Heart right ventricle (tissue), 16 donors: ENCODE measurements at regions of chr7 and their contacts with region 1.

Region 1: GRCh38 chr7:24199978-24200377 is 84.0 kb upstream of the NPY start:
- DNase-seq: no peak
- ATAC-seq: no peak
- H3K4me3 ChIP-seq: no peak overlapping the region
- H3K27ac ChIP-seq: no peak overlapping the region
- H3K4me1 ChIP-seq: no peaks in the 10 kb centered on the region
- H3K27me3 ChIP-seq: peaks cover 0 to 8% (median 0%) of the 10 kb centered on the region in 7 donors
- CTCF ChIP-seq: no peak

Region 2: DNA sequence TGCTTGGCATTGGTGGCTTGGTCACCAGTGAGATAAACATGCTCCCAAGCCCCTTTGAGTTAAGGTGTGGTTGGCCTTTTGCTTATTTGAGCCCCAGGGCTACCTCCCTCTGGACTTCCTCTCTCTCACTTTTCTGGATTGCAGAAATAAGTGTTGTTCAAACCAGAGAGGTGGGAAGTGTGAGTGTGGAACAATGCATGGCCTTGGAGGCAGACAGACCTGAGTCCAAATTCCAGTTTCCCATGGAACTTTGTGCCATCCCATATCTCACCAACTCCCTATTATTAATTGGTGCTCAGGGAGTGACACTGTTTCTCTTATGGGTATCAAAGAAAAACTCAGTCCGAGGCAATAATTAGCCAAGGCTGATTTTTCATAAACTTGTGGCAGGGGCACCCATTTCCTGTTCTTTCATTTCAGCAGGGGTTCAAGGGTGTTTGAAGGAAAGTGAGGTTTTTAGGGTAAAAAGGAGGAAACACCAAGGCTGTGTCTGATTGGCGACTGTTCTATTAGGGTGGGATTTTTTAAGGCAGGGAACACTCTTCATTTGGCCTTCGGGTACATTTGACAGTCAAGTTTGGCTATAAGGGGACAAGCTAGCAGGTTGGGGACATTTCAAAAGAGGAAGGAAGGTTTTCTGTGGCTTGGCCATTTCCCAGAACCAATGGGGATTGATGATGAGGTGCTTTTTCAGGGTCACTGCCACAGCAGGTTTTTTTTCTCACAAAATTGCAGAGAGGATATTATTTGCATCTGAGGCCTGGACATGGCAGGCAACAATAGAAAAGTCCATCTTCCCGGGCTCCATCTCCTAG is 64.8 kb before region 1 on chr7:
- intact Hi-C with region 1: loop called in 1 of 10 experiments (anchors 10 kb)
- DNase-seq: no peak
- ATAC-seq: no peak
- H3K4me3 ChIP-seq: no peak overlapping the region
- H3K27ac ChIP-seq: no peak overlapping the region
- H3K4me1 ChIP-seq: no peaks in the 10 kb centered on the region
- H3K27me3 ChIP-seq: peaks cover 0 to 3% (median 0%) of the 10 kb centered on the region in 7 donors
- CTCF ChIP-seq: no peak

Region 3: DNA sequence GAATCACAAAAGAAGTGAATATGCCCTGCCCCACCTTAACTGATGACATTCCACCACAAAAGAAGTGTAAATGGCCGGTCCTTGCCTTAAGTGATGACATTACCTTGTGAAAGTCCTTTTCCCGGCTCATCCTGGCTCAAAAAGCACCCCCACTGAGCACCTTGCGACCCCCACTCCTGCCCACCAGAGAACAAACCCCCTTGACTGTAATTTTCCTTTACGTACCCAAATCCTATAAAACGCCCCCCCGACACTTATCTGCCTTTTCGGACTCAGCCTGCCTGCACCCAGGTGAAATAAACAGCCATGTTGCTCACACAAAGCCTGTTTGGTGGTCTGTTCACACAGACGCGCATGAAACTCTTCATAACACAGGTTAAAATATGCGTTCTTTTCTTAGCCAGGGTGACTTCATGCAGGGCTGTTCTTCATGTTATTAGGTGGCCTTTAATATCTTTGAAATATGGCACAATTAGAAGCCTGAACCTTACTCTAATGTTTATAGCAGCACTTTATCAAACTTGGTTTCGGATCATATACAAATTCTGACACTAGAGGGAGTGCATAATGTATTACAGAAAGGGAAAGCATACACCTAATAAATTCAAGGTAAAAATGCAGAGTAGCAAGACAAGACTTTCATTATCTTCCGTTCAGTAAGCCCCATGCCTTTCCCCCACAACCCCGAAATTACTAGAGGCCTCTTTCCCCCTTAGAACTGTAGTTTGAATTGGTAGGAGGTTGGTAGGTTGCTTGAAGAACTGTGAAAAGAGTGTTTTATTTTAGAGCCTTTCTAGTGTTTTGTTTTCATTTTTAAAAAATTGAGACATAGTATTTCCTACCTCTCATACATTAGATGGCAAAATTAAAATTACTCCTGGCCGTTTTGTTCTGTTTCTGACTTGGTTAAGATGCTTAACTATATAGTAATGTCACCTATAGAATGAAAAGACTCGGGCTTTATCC is 201.9 kb after region 1 on chr7:
- intact Hi-C with region 1: no loop called
- DNase-seq: no peak
- ATAC-seq: peak in 1 of 8 donors; percentile 45
- H3K4me3 ChIP-seq: no peak overlapping the region
- H3K27ac ChIP-seq: no peak overlapping the region
- H3K4me1 ChIP-seq: no peaks in the 10 kb centered on the region
- H3K27me3 ChIP-seq: peaks cover 0 to 4% (median 0%) of the 10 kb centered on the region in 7 donors
- CTCF ChIP-seq: peak in 8 of 9 donors; percentile 9 to 57 (median 44)